ENCODE measurements at regions of chr17 and their contacts with region 1.

Region 1: DNA sequence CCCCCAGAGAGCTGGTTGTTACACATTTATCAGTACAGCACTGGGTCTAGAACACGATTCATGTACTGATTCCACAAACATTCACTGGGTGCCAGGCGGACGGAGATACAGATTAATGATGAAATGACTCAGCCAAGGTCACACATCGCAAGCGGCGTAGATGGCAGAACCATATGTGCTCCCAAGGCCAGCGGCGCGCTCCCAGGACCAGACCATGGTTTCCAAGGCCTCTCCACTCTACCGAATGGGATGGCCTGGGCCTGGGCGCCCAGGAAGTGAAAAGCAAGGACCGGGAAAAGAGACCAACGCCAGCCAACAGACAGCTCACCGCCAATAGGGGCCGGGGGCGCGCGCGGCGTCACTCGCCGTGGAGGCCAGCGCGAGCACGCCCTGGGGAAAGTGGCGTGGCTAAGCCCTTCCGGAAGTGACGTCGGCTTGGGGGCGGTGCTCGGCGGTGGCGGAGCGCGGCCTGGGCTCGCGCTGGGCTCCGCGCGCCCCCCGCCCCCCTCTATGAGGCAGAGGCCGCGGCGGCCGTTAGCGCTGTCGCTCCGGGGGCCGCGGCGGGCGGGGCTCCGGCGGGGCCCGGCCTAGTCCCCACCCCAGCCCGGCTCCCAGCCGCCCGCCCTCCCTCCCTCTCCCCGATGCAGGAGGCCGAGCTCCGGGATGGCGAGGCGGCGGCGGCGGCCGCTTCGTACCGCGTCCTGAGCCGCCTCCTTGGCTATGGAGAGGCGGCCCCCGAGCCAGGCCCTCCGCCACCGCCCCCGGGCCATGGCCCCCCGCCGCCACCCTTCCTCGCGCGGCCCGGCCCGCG is at the start of gene SOCS7:
- DNase-seq: peak; percentile 77 to 97 (median 89)
- ATAC-seq: peak; percentile 91 to 93 (median 92)
- H3K4me3 ChIP-seq: peak within 1 kb of the TSS; percentile 62 to 68
- H3K4me3 Mint-ChIP-seq: peak within 1 kb of the TSS; percentile 95 to 97 (median 95)
- H3K27ac ChIP-seq: peak within 1 kb of the TSS; percentile 65
- H3K27ac Mint-ChIP-seq: peak within 1 kb of the TSS; percentile 94 to 96
- H3K4me1 ChIP-seq: peaks cover 3 to 24% of the 10 kb centered on the region in 2 experiments
- H3K4me1 Mint-ChIP-seq: peaks cover 45 to 46% (median 46%) of the 10 kb centered on the region in 3 donors
- H3K27me3 ChIP-seq: no peaks in the 10 kb centered on the region
- H3K27me3 Mint-ChIP-seq: no peaks in the 10 kb centered on the region
- total RNA-seq, gene SOCS7: 18.9 to 24.5 (median 20.7) TPM

Region 2: DNA sequence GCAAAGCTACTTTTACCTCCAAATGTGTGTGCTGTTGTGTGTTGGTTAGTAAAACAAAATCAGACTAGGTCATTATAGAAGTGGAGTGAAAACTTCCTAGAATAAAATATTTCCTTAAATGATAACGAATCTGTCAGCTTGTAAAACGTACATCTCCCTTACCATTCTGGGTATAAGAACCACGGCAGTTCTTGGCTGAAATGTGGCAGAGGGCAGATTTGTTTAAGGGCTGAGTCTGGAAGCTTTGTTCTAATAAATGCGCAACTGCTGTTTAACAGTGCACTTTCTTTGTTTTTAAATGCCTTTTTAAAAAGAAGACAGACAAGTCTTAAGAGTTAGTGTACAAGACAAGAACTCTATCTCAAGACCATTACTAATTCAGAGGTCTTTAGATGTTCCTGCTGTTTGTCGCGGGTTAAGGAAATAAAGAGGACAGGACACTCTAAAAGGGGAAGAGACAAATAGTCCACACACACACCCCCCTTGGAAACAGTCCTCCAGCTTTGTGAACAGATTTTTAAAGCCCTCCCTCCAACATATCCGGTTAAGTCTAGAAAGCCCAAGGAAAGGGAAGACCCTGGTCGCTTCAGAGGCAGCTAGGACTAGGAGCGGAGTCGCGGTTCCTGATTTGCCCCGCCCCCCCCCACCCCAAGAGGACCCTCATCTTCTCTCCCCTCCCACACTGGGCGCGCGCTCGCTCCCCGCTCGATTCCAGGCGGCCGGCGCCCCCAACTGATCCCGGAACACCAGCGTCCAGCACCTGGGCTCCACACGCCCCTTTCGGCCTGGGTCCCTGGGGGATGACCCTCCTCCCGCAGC is 743.1 kb before region 1 on chr17:
- CTCF ChIA-PET with region 1: no interaction called
- POLR2A ChIA-PET with region 1: interaction called in 1 of 2 experiments, 21 read pairs
- DNase-seq: peak in 10 of 35 experiments; percentile 1 to 47 (median 10)
- ATAC-seq: peak; percentile 2 to 11 (median 9)
- H3K4me3 ChIP-seq: peak overlapping the region; percentile 87 to 95
- H3K4me3 Mint-ChIP-seq: peak overlapping the region; percentile 81 to 90 (median 90)
- H3K27ac ChIP-seq: peak overlapping the region; percentile 78
- H3K27ac Mint-ChIP-seq: peak overlapping the region; percentile 91 to 92
- H3K4me1 ChIP-seq: peaks cover 36% of the 10 kb centered on the region in 2 experiments
- H3K4me1 Mint-ChIP-seq: peaks cover 46 to 51% (median 47%) of the 10 kb centered on the region in 3 donors
- H3K27me3 ChIP-seq: no peaks in the 10 kb centered on the region
- H3K27me3 Mint-ChIP-seq: no peaks in the 10 kb centered on the region

Region 3: DNA sequence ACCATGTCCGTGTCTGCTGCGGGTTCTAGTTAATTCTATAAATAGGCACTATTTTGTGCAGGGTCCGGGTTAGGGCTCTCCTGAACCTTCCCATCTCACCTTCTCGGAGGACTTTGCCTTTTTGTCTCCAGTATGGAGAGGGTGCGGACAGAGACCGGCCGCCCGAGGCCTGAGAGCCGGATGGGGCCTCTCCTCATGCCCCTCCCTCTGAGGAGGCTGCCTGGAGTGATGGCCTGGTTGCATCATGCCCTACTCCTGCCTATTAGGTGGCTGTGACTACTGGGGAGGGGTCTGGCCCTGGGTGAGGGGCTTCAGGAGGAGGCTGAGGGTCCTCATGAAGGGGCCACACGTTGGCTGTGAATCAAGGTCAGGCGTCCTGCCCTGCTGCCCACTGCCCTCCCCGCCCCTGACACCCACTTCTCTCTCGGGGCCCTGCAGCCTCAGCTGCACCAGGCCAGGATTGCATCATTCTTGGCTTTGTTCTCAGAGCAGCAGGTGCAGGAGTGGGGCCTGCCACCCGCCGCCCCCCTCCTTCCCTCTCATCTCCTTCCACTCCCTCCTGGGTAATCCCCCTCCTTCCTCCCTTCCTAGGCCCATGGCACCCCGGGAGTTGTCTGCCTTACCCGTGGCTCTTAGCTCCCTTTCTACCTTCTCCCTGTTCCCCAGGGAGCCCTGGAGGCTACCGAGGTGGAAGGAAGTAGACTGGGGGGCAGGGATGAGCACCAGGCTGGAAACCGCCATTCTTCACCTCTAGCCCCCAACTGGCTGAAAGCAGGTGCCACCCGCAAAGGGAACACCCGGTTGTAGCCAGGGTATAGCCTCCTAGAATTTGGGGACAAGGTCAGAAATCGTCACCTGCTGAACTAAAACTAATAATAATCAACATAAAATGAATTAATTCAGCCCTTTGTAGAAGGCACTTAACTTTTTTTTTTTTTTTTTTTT is 63.9 kb after region 1 on chr17:
- CTCF ChIA-PET with region 1: interaction called, 41 to 51 read pairs
- POLR2A ChIA-PET with region 1: no interaction called
- DNase-seq: no peak
- ATAC-seq: no peak
- H3K4me3 ChIP-seq: no peak overlapping the region
- H3K4me3 Mint-ChIP-seq: no peak overlapping the region
- H3K27ac ChIP-seq: no peak overlapping the region
- H3K27ac Mint-ChIP-seq: no peak overlapping the region
- H3K4me1 ChIP-seq: peaks cover 0 to 18% of the 10 kb centered on the region in 2 experiments
- H3K4me1 Mint-ChIP-seq: peaks cover 3 to 6% (median 4%) of the 10 kb centered on the region in 3 donors
- H3K27me3 ChIP-seq: peaks cover 0 to 58% of the 10 kb centered on the region in 2 experiments
- H3K27me3 Mint-ChIP-seq: peaks cover 23 to 47% of the 10 kb centered on the region in 2 donors

Region 4: DNA sequence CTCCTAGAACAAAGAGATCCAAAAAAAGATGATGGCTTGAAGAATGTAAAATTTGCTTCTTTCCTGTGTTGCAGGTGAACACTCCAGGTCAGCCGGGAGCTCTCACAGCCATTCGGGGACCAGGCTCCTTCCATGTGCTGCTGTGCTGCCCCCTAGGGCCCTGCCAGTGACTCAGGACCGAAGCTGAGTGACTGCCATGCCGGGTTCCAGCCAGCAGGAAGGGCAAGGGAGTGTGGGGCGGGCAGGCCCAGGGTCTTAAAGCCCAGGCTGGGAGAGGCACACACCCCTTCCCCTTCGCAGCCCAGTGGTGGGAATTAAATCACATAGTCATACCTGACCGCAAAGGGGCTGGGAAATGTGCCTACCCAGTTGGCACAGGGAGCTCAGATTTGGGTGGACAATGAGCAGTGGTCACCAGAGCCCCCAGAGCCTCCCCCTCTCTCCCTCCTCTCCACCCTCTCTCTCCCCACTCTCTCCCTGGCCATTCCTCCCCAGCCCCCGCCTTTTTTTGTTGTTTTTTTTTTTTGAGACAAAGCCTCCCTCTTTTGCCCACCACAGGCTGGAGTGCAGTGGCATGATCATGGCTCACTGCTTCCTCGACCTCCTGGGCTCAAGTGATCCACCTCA is 311.6 kb after region 1 on chr17:
- CTCF ChIA-PET with region 1: no interaction called
- POLR2A ChIA-PET with region 1: no interaction called
- DNase-seq: peak in 8 of 35 experiments; percentile 12 to 48 (median 22)
- ATAC-seq: peak in 3 of 4 experiments; percentile 51 to 68 (median 53)
- H3K4me3 ChIP-seq: no peak overlapping the region
- H3K4me3 Mint-ChIP-seq: no peak overlapping the region
- H3K27ac ChIP-seq: no peak overlapping the region
- H3K27ac Mint-ChIP-seq: no peak overlapping the region
- H3K4me1 ChIP-seq: peaks cover 0 to 8% of the 10 kb centered on the region in 2 experiments
- H3K4me1 Mint-ChIP-seq: peaks cover 6 to 9% (median 7%) of the 10 kb centered on the region in 3 donors
- H3K27me3 ChIP-seq: peaks cover 0 to 57% of the 10 kb centered on the region in 2 experiments
- H3K27me3 Mint-ChIP-seq: peaks cover 20 to 42% of the 10 kb centered on the region in 2 donors

Measured in T-cell (primary cell).